ENCODE measurements at regions of chr11 and their contacts with region 1.

Region 1: GRCh38 chr11:130782361-130783221 is 133.7 kb downstream of the SNX19 start:
- DNase-seq: no peak
- H3K4me3 ChIP-seq: peak overlapping the region; percentile 27
- H3K27ac ChIP-seq: peak overlapping the region; percentile 85
- H3K27me3 ChIP-seq: no peaks in the 10 kb centered on the region
- CTCF ChIP-seq: no peak

Region 2: GRCh38 chr11:130772266-130773227 is 10.0 kb before region 1 on chr11:
- CTCF ChIA-PET with region 1: no interaction called
- POLR2A ChIA-PET with region 1: interaction called, 12 read pairs
- DNase-seq: peak; percentile 92
- H3K4me3 ChIP-seq: no peak overlapping the region
- H3K27ac ChIP-seq: peak overlapping the region; percentile 62
- H3K27me3 ChIP-seq: no peaks in the 10 kb centered on the region
- CTCF ChIP-seq: no peak

Region 3: DNA sequence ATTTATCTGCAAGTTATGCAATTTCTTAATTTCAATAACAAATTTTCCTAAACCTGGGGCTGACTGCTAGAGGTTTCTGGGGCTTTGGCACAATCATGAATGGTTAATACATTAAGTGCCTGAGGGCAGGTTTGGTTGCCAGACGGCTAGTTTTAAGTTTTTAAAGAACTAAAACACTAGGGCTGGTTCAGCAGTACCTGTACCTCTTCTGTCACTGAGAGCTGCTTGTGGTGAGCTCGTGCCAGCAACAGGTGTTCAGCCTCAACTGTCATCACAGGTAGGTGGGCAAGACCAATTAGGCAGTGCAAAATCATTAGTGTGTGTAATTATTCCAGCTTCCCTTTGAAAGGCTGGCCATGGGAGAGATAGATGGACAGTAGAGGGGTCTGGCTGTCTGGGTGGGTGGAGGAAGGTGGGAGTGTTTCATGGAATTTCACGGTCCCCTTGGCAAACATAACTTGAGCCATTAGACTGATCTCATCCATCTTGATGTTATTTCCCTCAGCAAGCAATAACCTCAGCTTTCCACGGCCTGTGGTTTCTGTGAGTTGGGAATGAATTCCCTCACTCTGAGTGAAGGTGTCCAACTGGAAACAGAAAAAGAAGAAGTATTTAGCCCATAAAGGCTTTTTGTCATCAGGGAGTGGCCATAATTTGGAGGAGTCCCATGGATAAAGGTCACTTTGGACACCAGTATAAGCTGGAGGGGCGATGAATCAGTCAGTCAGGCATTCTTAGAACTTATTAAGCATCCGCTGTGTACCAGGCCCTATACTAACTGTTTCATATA is 18.9 kb after region 1 on chr11:
- CTCF ChIA-PET with region 1: no interaction called
- POLR2A ChIA-PET with region 1: no interaction called
- DNase-seq: no peak
- H3K4me3 ChIP-seq: no peak overlapping the region
- H3K27ac ChIP-seq: no peak overlapping the region
- H3K27me3 ChIP-seq: no peaks in the 10 kb centered on the region
- CTCF ChIP-seq: no peak

Region 4: DNA sequence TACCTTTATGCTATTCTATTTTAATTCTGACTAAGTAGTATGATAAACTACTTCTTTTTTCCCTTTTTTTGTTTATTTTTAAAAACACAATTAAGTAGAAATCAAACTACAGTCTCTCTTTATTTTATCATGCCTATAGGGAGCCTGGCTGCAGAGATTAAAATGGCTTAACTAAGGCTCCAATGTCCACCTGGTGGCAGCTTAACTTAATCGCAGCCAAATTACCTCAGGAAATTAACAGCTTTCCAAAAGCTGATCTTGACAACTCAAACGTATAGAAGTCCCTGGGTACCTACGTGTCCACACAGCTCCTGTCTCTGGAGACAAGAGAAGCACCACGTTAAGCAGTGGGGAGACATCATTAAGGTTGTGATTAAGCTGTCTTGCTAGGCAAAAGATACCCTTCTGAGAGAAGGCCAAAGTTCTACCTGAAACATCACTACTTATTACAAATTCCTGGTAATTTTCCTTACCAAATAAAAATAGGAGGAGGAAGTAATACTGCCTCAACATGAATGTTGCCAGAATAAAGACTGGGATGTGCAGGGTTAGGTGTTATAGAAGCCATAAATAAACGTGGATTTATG is 196.9 kb after region 1 on chr11:
- CTCF ChIA-PET with region 1: no interaction called
- POLR2A ChIA-PET with region 1: no interaction called
- DNase-seq: peak; percentile 30
- H3K4me3 ChIP-seq: no peak overlapping the region
- H3K27ac ChIP-seq: no peak overlapping the region
- H3K27me3 ChIP-seq: peaks cover 8% of the 10 kb centered on the region
- CTCF ChIP-seq: peak; percentile 77